Activated CD8-positive, alpha-beta memory T cell treated with anti-CD3 and anti-CD28 coated beads, Interleukin-2, amount 10 ng/mL, durations not matched to agents 7 days and 5 days (primary cell): ENCODE measurements at regions of chr11 and their contacts with region 1.

Region 1: GRCh38 chr11:65013692-65014145 is 241 bp upstream of the ARL2 start:
- DNase-seq: peak; percentile 91
- ATAC-seq: peak; percentile 85
- H3K4me3 Mint-ChIP-seq: peak overlapping the region; percentile 84
- H3K27ac Mint-ChIP-seq: peak overlapping the region; percentile 97
- H3K4me1 Mint-ChIP-seq: peaks cover 28% of the 10 kb centered on the region
- H3K27me3 Mint-ChIP-seq: no peaks in the 10 kb centered on the region

Region 2: DNA sequence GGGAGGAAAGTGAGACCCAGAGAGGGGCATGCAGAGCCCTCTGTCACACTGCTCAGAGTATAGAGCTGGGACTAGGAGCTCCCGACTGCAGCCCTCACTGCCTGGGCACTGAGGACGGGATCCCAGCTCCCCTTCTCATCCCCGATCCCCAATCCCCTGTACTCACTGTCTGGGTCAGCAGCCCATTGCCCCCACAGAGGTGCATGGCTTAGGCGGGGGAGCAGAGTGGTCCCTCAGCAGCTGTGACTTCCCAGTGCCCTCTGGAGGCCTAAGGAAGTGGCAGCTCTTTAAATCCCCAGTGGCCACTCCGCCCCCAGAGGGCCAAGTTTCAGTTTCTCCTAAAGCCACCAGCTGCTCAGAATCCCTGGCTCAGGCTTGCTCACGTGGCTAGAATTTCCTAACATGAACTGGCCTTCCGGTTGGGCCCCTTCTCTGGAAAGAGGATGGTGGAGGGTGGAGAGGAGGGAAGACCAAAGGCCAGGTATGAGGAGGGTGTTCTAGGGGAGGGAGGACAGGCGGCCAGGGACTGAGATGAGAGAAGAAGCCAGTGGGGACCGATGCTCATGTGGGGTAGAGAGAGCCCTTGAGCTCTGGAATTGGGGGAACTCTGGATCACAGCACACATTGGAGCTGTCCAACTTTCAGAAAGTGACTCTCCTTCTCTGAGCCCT is 16.9 kb before region 1 on chr11 and contains the start of gene BATF2:
- CTCF ChIA-PET with region 1: interaction called, 35 read pairs
- DNase-seq: peak; percentile 50
- ATAC-seq: peak; percentile 66
- H3K4me3 Mint-ChIP-seq: peak within 1 kb of the TSS; percentile 60
- H3K27ac Mint-ChIP-seq: peak within 1 kb of the TSS; percentile 70
- H3K4me1 Mint-ChIP-seq: peaks cover 30% of the 10 kb centered on the region
- H3K27me3 Mint-ChIP-seq: no peaks in the 10 kb centered on the region
- total RNA-seq, gene BATF2: 0.33 to 0.67 TPM

Region 3: GRCh38 chr11:65040847-65041621 is 27.3 kb after region 1 on chr11 and contains the start of gene SAC3D1:
- CTCF ChIA-PET with region 1: interaction called, 32 read pairs
- DNase-seq: peak; percentile 98
- ATAC-seq: peak; percentile 95
- H3K4me3 Mint-ChIP-seq: peak within 1 kb of the TSS; percentile 84
- H3K27ac Mint-ChIP-seq: peak within 1 kb of the TSS; percentile 97
- H3K4me1 Mint-ChIP-seq: peaks cover 34% of the 10 kb centered on the region
- H3K27me3 Mint-ChIP-seq: no peaks in the 10 kb centered on the region
- total RNA-seq, gene SAC3D1: 24.3 to 27.2 TPM

Region 4: GRCh38 chr11:65083834-65084597 is 70.3 kb after region 1 on chr11 and contains the starts of genes CDCA5 and ZFPL1:
- CTCF ChIA-PET with region 1: interaction called, 25 read pairs
- DNase-seq: peak; percentile 97
- ATAC-seq: peak; percentile 82
- H3K4me3 Mint-ChIP-seq: peak within 1 kb of the TSS; percentile 98
- H3K27ac Mint-ChIP-seq: peak within 1 kb of the TSS; percentile 99
- H3K4me1 Mint-ChIP-seq: peaks cover 54% of the 10 kb centered on the region
- H3K27me3 Mint-ChIP-seq: peaks cover 2% of the 10 kb centered on the region
- total RNA-seq, gene CDCA5: 128 to 147 TPM
- total RNA-seq, gene ZFPL1: 28.3 to 32.4 TPM

Region 5: GRCh38 chr11:65111744-65112414 is 98.2 kb after region 1 on chr11 and contains the start of gene TM7SF2:
- CTCF ChIA-PET with region 1: interaction called, 68 read pairs
- DNase-seq: peak; percentile 97
- ATAC-seq: peak; percentile 83
- H3K4me3 Mint-ChIP-seq: peak within 1 kb of the TSS; percentile 80
- H3K27ac Mint-ChIP-seq: peak within 1 kb of the TSS; percentile 85
- H3K4me1 Mint-ChIP-seq: peaks cover 49% of the 10 kb centered on the region
- H3K27me3 Mint-ChIP-seq: no peaks in the 10 kb centered on the region
- total RNA-seq, gene TM7SF2: 21.0 to 26.2 TPM

Region 6: DNA sequence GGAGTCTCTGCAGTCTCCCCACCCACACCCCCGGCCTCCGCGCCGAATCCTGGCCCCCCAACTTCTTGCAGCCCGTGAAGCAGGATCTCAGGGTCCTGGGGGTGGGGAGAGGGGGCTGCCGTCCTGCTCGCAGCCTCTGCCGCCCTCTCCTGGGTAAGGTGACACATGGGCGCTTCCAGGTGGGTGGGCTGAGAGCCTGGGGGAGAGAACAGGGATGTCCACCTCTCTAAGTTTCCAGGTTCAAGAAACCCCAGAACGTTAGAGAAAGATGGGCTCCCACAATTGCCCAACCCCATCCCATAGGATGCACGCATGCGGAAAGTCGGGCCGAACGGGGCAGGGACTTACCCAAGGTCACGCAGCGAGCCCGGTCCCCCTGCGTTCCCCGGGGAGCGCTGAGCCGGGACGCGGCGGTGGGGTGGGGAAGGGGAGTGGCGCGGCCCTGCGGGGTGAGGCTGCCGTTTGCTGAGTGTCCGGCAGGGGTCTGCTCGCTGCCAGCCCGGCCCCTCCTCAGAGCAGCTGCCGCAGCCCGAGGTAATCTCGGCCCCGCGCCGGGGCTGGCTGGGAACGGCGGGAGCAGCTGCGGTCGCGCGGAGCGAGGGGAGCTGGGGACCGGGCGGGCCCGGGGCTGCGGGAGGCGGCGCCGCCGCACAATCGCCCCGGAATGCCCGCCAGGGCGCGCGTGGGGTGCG is 167.3 kb after region 1 on chr11:
- CTCF ChIA-PET with region 1: interaction called, 10 read pairs
- DNase-seq: peak; percentile 72
- ATAC-seq: peak; percentile 79
- H3K4me3 Mint-ChIP-seq: peak overlapping the region; percentile 78
- H3K27ac Mint-ChIP-seq: peak overlapping the region; percentile 68
- H3K4me1 Mint-ChIP-seq: peaks cover 19% of the 10 kb centered on the region
- H3K27me3 Mint-ChIP-seq: no peaks in the 10 kb centered on the region

Region 7: GRCh38 chr11:65225279-65226102 is 211.8 kb after region 1 on chr11:
- CTCF ChIA-PET with region 1: no interaction called
- DNase-seq: peak; percentile 72
- ATAC-seq: peak; percentile 90
- H3K4me3 Mint-ChIP-seq: peak overlapping the region; percentile 70
- H3K27ac Mint-ChIP-seq: no peak overlapping the region
- H3K4me1 Mint-ChIP-seq: peaks cover 19% of the 10 kb centered on the region
- H3K27me3 Mint-ChIP-seq: peaks cover 17% of the 10 kb centered on the region